Spleen (tissue), 13 donors: ENCODE measurements at regions of chr16 and their contacts with region 1.

Region 1: GRCh38 chr16:76897816-76898215 is 293.2 kb upstream of the MON1B start:
- DNase-seq: no peak
- H3K4me3 ChIP-seq: no peak overlapping the region
- H3K27ac ChIP-seq: peak overlapping the region in 3 of 8 donors; percentile 24 to 49 (median 35)
- H3K4me1 ChIP-seq: no peaks in the 10 kb centered on the region
- H3K27me3 ChIP-seq: no peaks in the 10 kb centered on the region
- CTCF ChIP-seq: no peak
- POLR2A ChIP-seq: no peak

Region 2: GRCh38 chr16:76835339-76835738 is 62.5 kb before region 1 on chr16:
- intact Hi-C with region 1: loop called (anchors 10 kb)
- DNase-seq: no peak
- H3K4me3 ChIP-seq: no peak overlapping the region
- H3K27ac ChIP-seq: no peak overlapping the region
- H3K4me1 ChIP-seq: no peaks in the 10 kb centered on the region
- H3K27me3 ChIP-seq: no peaks in the 10 kb centered on the region
- CTCF ChIP-seq: no peak
- POLR2A ChIP-seq: no peak